Heart right ventricle (tissue), 16 donors: ENCODE measurements at regions of chr1 and their contacts with region 1.

Region 1: DNA sequence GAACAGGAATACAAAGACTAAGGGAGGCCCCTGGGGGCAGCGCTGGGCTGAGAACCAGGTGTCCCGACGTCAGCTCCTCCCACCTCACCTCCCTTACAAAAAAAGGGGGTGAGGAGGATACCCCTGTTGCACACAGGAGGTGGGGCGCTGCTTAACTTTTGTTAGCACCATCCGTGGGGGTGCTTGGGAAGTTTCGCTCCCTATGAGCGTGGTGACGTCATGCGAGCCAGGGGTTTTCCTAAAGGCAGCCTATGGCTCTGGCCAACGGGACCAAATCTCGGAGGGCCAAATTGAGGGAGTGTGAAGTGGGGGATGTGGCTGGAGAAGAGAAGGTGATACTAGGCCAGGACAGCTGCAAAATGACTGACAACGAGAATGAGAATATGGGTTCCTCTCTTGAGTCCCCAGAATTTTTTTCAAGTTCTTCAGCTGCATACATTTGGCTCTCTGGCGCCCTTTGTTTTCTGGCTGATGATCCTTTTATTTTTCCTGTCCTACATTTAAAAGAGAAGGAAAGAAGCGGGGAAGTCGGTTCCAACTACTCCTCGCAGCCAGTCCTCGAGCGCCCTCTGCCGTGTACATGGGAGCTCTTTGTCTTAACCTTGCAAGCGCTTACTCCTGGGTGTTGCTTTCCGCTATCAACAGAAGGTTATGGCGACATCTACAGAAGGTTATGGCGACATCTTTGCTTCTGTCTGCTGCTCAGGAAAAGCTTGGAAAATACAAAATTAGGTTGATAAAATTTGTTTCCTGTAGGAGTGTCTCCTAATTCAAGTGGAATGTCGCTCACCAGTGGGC is 48.0 kb upstream of the ZC3H11B start:
- DNase-seq: peak; percentile 90
- ATAC-seq: peak; percentile 79 to 91 (median 86)
- H3K4me3 ChIP-seq: peak overlapping the region in 7 of 10 donors; percentile 9 to 40 (median 23)
- H3K27ac ChIP-seq: peak overlapping the region in 3 of 10 donors; percentile 2 to 58 (median 36)
- H3K4me1 ChIP-seq: peaks cover 0 to 36% (median 25%) of the 10 kb centered on the region in 9 donors
- H3K27me3 ChIP-seq: no peaks in the 10 kb centered on the region
- CTCF ChIP-seq: peak; percentile 49 to 90 (median 81)

Region 2: GRCh38 chr1:218330043-218330623 is 1330.7 kb before region 1 on chr1:
- intact Hi-C with region 1: loop called in 5 of 10 experiments (anchors 5 to 10 kb)
- DNase-seq: no peak
- ATAC-seq: peak in 2 of 8 donors; percentile 37 to 45
- H3K4me3 ChIP-seq: no peak overlapping the region
- H3K27ac ChIP-seq: no peak overlapping the region
- H3K4me1 ChIP-seq: no peaks in the 10 kb centered on the region
- H3K27me3 ChIP-seq: no peaks in the 10 kb centered on the region
- CTCF ChIP-seq: peak; percentile 31 to 86 (median 69)

Region 3: GRCh38 chr1:219416594-219417238 is 244.1 kb before region 1 on chr1:
- intact Hi-C with region 1: loop called in 1 of 10 experiments (anchors 10 kb)
- DNase-seq: peak in 1 of 2 donors; percentile 56
- ATAC-seq: peak in 5 of 8 donors; percentile 53 to 62 (median 57)
- H3K4me3 ChIP-seq: no peak overlapping the region
- H3K27ac ChIP-seq: peak overlapping the region in 1 of 10 donors; percentile 1
- H3K4me1 ChIP-seq: peaks cover 0 to 27% (median 14%) of the 10 kb centered on the region in 9 donors
- H3K27me3 ChIP-seq: no peaks in the 10 kb centered on the region
- CTCF ChIP-seq: peak in 8 of 9 donors; percentile 51 to 75 (median 62)

Region 4: DNA sequence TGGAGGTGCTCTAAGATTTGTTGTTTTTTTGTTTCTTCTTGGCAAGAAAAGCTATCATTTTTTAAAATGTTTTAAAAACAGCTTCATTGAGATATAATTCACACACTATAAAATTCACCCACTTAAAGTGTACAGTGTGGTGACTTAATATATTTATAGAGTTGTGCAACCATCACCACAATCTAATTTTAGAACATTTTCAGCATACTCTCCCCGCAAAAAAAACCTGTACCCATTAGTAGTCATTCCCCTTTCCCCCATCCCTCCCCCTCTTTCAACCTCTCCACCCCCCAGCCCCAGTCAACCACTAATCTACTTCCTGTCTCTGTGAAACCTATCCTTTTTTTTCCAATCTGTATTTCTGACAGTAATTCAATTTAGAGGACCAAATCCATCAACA is 78.6 kb before region 1 on chr1:
- intact Hi-C with region 1: loop called in 3 of 10 experiments (anchors 10 kb)
- DNase-seq: no peak
- ATAC-seq: peak in 4 of 8 donors; percentile 45 to 56 (median 47)
- H3K4me3 ChIP-seq: no peak overlapping the region
- H3K27ac ChIP-seq: peak overlapping the region in 1 of 10 donors; percentile 28
- H3K4me1 ChIP-seq: peaks cover 0 to 27% (median 9%) of the 10 kb centered on the region in 9 donors
- H3K27me3 ChIP-seq: no peaks in the 10 kb centered on the region
- CTCF ChIP-seq: no peak

Region 5: GRCh38 chr1:219798283-219799030 is 137.6 kb after region 1 on chr1:
- intact Hi-C with region 1: loop called in 3 of 10 experiments (anchors 5 to 10 kb)
- DNase-seq: no peak
- ATAC-seq: peak in 1 of 8 donors; percentile 55
- H3K4me3 ChIP-seq: no peak overlapping the region
- H3K27ac ChIP-seq: peak overlapping the region in 1 of 10 donors; percentile 38
- H3K4me1 ChIP-seq: peaks cover 0 to 6% (median 0%) of the 10 kb centered on the region in 9 donors
- H3K27me3 ChIP-seq: no peaks in the 10 kb centered on the region
- CTCF ChIP-seq: no peak

Region 6: DNA sequence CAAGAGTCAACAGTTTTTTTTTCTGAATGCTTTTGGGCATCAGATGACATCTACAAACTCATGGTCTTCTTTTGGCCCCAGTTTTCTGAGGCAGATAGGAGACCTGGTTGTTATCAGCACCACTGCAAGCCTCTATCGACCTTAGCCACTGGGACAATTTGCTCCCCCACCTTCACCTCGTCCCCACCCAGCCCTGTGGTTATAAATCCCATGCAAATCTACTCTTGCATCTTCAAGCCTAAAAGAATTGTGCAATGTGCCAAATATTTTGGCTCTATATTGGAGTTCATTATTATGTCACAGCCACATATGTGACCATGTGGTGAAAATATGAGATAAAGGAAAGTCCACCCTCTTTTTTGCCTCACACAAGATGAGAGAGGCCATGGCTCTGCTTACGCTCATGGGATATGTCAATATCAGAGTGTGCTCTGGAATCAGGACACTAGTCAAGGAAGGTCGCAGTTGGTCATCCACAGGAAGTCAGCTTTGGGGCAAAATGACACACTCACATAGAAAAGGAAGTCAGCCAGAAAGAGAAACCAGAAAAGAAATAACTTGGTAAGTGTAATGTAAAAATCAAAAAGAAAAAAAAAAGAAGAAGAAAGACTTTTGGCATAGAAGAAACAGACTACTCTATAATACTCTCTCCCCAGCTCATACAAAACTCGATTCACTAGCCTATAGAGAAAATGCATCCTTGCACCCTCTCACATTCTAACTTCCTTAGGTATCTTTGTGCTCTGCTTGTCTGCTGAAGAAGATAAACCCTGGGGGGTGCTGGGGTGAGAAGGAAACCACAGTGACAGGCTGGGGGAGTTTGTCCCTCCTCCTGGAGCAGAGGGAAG is 246.3 kb after region 1 on chr1:
- intact Hi-C with region 1: no loop called
- DNase-seq: no peak
- ATAC-seq: peak in 1 of 8 donors; percentile 33
- H3K4me3 ChIP-seq: no peak overlapping the region
- H3K27ac ChIP-seq: no peak overlapping the region
- H3K4me1 ChIP-seq: no peaks in the 10 kb centered on the region
- H3K27me3 ChIP-seq: peaks cover 0 to 4% (median 0%) of the 10 kb centered on the region in 7 donors
- CTCF ChIP-seq: no peak